Left lung (tissue), 14 donors: ENCODE measurements at regions of chr14 and their contacts with region 1.

Region 1: GRCh38 chr14:105045710-105046326 is 19.4 kb downstream of the GPR132 start:
- DNase-seq: peak; percentile 78 to 100 (median 91)
- ATAC-seq: peak; percentile 97
- H3K4me3 ChIP-seq: no peak overlapping the region
- H3K27ac ChIP-seq: no peak overlapping the region
- H3K4me1 ChIP-seq: peaks cover 0 to 13% of the 10 kb centered on the region in 2 donors
- H3K27me3 ChIP-seq: no peaks in the 10 kb centered on the region
- CTCF ChIP-seq: peak; percentile 100

Region 2: GRCh38 chr14:104895786-104896661 is 149.8 kb before region 1 on chr14:
- intact Hi-C with region 1: loop called in 1 of 2 experiments (anchors 10 kb)
- DNase-seq: peak; percentile 52 to 82 (median 69)
- ATAC-seq: peak; percentile 72
- H3K4me3 ChIP-seq: no peak overlapping the region
- H3K27ac ChIP-seq: no peak overlapping the region
- H3K4me1 ChIP-seq: peaks cover 0 to 15% of the 10 kb centered on the region in 2 donors
- H3K27me3 ChIP-seq: no peaks in the 10 kb centered on the region
- CTCF ChIP-seq: no peak

Region 3: DNA sequence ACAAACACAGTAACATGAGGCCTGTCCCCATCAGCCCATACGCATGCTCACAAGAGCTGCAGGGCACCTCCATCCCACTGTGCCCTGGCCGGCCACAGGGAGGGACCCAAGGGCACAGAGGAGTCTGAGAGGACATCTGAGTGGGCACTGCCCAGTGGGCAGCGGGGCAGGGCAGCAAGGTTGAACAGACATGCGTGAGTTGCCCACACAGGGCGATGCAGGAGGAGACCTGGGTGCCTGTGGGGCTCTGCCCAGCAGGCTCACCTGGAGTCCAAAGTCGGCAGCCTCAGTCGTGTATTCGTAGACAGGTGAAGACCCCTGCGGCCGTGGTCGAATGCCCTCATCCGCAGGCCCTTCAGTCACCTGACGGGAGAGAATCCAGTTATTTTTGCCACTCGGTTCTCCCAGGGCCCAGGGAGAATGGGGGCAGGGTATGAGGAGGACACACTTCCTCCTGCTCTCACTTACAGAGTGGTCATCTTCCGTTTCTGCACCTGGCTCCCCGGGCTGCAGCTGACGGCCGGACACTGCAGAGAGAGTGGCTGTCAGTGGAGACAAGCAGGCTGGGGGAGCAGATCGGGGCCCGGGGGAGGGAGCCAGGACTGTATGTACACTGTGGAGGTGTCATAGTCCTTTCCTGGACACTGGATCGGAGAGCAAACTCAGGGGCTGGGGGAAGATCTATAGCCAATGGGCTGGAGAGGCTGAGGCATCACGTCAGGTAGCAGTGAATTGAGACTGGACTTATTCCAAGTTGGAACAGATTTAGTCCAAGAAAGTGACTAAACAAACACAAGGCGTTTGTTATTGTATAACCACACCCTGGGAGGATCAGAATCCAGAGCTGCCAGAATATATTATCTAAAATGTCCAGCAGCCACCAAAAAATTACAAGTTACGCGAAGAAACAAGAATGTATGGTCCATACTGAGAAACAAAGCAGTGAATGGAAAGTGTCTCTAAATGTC is 88.4 kb before region 1 on chr14:
- intact Hi-C with region 1: no loop called
- DNase-seq: no peak
- ATAC-seq: peak; percentile 40
- H3K4me3 ChIP-seq: no peak overlapping the region
- H3K27ac ChIP-seq: no peak overlapping the region
- H3K4me1 ChIP-seq: no peaks in the 10 kb centered on the region
- H3K27me3 ChIP-seq: peaks cover 0 to 5% of the 10 kb centered on the region in 2 donors
- CTCF ChIP-seq: no peak

Region 4: GRCh38 chr14:104976198-104977007 is 69.4 kb before region 1 on chr14:
- intact Hi-C with region 1: loop called in 1 of 2 experiments (anchors 5 kb)
- DNase-seq: peak in 3 of 4 donors; percentile 78 to 97 (median 86)
- ATAC-seq: peak; percentile 43
- H3K4me3 ChIP-seq: no peak overlapping the region
- H3K27ac ChIP-seq: no peak overlapping the region
- H3K4me1 ChIP-seq: peaks cover 45 to 86% of the 10 kb centered on the region in 2 donors
- H3K27me3 ChIP-seq: peaks cover 0 to 32% of the 10 kb centered on the region in 2 donors
- CTCF ChIP-seq: peak; percentile 91 to 96

Region 5: DNA sequence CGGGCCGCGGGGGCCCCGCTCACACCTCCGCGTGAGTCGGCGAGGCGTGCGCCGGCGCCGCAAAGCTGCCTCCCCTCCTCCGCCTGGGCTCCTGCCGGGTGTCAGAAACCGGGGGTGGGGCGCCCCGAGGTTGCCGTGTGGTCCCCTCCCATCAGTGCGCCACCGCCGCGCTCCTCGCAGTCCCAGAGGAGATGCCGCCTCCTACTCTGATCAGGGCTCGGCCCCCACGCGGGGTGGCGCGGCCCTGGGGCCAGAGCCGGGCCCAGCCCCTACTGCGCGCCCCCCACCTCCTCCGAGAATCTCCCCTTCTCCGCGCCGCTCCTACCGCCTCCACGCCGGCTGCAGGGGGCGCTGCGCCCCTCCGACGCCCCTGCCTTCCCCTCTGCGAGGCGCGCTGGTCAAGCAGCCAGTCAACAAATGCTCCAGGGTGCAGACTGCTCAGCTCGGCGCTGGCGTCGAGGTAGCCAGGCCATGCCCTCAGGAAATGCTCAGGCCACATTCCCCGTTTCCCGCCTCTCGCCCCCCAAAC is 123.2 kb after region 1 on chr14:
- intact Hi-C with region 1: no loop called
- DNase-seq: no peak
- ATAC-seq: peak; percentile 17
- H3K4me3 ChIP-seq: peak overlapping the region in 1 of 2 donors; percentile 36
- H3K27ac ChIP-seq: peak overlapping the region in 1 of 2 donors; percentile 55
- H3K4me1 ChIP-seq: peaks cover 16 to 36% of the 10 kb centered on the region in 2 donors
- H3K27me3 ChIP-seq: peaks cover 0 to 54% of the 10 kb centered on the region in 2 donors
- CTCF ChIP-seq: peak; percentile 22 to 53